ENCODE measurements at regions of chr9 and their contacts with region 1.

Region 1: GRCh38 chr9:131181091-131181681 is 55.8 kb downstream of the NUP214 start:
- DNase-seq: no peak
- H3K4me3 ChIP-seq: no peak overlapping the region
- H3K27ac ChIP-seq: no peak overlapping the region
- H3K4me1 ChIP-seq: no peaks in the 10 kb centered on the region
- H3K27me3 ChIP-seq: no peaks in the 10 kb centered on the region
- CTCF ChIP-seq: no peak
- POLR2A ChIP-seq: no peak

Region 2: GRCh38 chr9:130587921-130588320 is 593.3 kb before region 1 on chr9:
- intact Hi-C with region 1: loop called (anchors 5 kb)
- DNase-seq: no peak
- H3K4me3 ChIP-seq: no peak overlapping the region
- H3K27ac ChIP-seq: no peak overlapping the region
- H3K4me1 ChIP-seq: no peaks in the 10 kb centered on the region
- H3K27me3 ChIP-seq: no peaks in the 10 kb centered on the region
- CTCF ChIP-seq: no peak
- POLR2A ChIP-seq: no peak

Region 3: GRCh38 chr9:131203431-131204218 is 22.4 kb after region 1 on chr9:
- intact Hi-C with region 1: no loop called
- DNase-seq: no peak
- H3K4me3 ChIP-seq: no peak overlapping the region
- H3K27ac ChIP-seq: no peak overlapping the region
- H3K4me1 ChIP-seq: no peaks in the 10 kb centered on the region
- H3K27me3 ChIP-seq: no peaks in the 10 kb centered on the region
- CTCF ChIP-seq: no peak
- POLR2A ChIP-seq: no peak

Region 4: GRCh38 chr9:131334629-131335367 is 153.6 kb after region 1 on chr9:
- intact Hi-C with region 1: loop called (anchors 10 kb)
- DNase-seq: no peak
- H3K4me3 ChIP-seq: no peak overlapping the region
- H3K27ac ChIP-seq: no peak overlapping the region
- H3K4me1 ChIP-seq: no peaks in the 10 kb centered on the region
- H3K27me3 ChIP-seq: no peaks in the 10 kb centered on the region
- CTCF ChIP-seq: no peak
- POLR2A ChIP-seq: no peak

Measured in breast epithelium (tissue), 4 donors.